ENCODE measurements at regions of chr3 and their contacts with region 1.

Region 1: DNA sequence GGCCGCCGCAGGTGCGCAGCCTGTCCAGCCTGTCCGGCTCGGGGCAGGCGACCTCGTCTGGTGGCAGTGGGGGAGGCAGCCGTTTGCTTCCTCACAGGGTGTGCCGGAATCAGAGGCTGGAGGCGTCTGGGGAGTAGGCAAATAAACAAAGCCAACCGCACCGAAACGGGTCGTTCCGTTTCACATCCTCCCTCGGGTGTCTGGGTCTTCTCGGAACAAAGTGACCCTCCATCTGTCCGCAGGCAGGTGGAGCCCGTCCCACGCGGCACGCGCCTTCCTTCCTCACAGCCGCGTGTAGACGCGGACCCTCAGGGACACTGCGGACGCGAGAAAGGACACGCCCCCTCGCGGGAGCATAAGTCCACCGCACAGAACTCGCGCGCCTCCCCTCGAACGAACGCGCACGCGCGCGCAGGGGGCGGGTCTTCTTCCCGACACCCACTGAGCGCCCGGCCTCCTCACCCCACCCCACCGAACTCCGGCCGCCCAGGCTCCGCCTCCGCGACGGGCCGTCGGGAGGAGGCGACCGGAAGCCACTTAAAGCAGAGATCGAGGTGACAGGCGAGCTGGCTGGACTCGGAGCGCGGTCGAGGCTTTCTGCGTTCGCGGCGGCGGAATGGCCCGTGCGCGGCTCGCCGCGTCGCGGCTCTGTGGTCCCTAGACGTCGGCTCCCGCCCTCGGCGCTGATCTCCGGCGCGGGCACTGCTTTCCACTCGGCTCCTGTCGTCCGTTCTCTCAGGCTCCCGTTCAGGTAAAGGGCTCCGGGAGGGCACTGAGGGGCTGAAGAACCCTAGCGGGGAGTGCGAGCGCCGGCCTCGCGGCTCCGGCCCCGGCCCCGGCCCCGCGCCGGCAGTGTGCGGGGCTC is at the start of gene TIPARP:
- DNase-seq: peak; percentile 94
- ATAC-seq: peak; percentile 86
- H3K4me3 ChIP-seq: peak within 1 kb of the TSS; percentile 70 to 89
- H3K27ac ChIP-seq: peak within 1 kb of the TSS; percentile 83
- H3K4me1 ChIP-seq: peaks cover 12 to 19% of the 10 kb centered on the region in 2 experiments
- H3K27me3 ChIP-seq: no peaks in the 10 kb centered on the region
- CTCF ChIP-seq: peak; percentile 61 to 97 (median 66)
- POLR2A ChIP-seq: peak; percentile 97
- RAD21 ChIP-seq: peak; percentile 84
- total RNA-seq, gene TIPARP: 51.3 TPM

Region 2: GRCh38 chr3:155912579-155913190 is 761.6 kb before region 1 on chr3:
- CTCF ChIA-PET with region 1: no interaction called
- POLR2A ChIA-PET with region 1: no interaction called
- RAD21 ChIA-PET with region 1: no interaction called
- intact Hi-C with region 1: no loop called
- DNase-seq: no peak
- ATAC-seq: no peak
- H3K4me3 ChIP-seq: no peak overlapping the region
- H3K27ac ChIP-seq: no peak overlapping the region
- H3K4me1 ChIP-seq: no peaks in the 10 kb centered on the region
- H3K27me3 ChIP-seq: no peaks in the 10 kb centered on the region
- CTCF ChIP-seq: no peak
- POLR2A ChIP-seq: no peak
- RAD21 ChIP-seq: no peak

Region 3: GRCh38 chr3:156040041-156040440 is 634.2 kb before region 1 on chr3:
- CTCF ChIA-PET with region 1: no interaction called
- POLR2A ChIA-PET with region 1: no interaction called
- RAD21 ChIA-PET with region 1: no interaction called
- intact Hi-C with region 1: loop called (anchors 5 kb)
- DNase-seq: no peak
- ATAC-seq: no peak
- H3K4me3 ChIP-seq: no peak overlapping the region
- H3K27ac ChIP-seq: no peak overlapping the region
- H3K4me1 ChIP-seq: no peaks in the 10 kb centered on the region
- H3K27me3 ChIP-seq: no peaks in the 10 kb centered on the region
- CTCF ChIP-seq: no peak
- POLR2A ChIP-seq: no peak
- RAD21 ChIP-seq: no peak

Region 4: DNA sequence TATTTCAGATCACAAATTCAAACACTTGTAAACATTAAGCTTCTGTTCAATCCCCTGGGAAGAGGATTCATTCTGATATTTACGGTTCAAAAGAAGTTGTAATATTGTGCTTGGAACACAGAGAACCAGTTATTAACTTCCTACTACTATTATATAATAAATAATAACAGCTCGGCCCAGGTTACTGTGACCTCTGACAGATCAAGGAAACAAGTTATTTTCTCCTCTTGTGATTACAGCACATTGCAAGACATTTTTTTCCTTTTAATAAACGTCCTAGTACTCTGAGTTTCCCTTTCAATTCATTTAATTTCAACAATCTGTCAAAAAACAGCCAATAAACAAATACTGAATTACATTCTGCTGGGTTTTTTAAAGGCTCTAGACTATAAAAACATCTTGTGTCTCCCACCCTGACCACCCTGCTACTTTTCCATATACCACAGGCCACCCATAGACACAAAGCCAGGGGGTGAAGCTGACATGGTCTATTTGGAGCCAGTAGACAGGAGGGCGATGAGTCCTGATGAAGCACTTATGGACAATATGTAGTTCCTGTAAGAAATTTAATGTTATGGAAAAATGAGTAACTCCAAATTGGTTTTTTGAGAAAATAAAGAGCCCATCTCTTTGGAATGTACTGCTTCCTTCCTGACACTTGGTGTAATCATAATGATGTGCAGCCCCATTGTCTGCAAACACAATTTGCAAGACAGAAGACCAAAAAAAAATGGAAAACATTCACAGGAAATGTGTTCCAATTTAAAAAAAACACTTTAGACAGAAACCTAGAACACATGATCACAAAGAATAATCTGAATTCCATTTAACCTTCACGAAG is 131.3 kb before region 1 on chr3:
- CTCF ChIA-PET with region 1: interaction called, 4 read pairs
- POLR2A ChIA-PET with region 1: no interaction called
- RAD21 ChIA-PET with region 1: no interaction called
- intact Hi-C with region 1: loop called (anchors 5 kb)
- DNase-seq: no peak
- ATAC-seq: no peak
- H3K4me3 ChIP-seq: no peak overlapping the region
- H3K27ac ChIP-seq: no peak overlapping the region
- H3K4me1 ChIP-seq: no peaks in the 10 kb centered on the region
- H3K27me3 ChIP-seq: no peaks in the 10 kb centered on the region
- CTCF ChIP-seq: no peak
- POLR2A ChIP-seq: no peak
- RAD21 ChIP-seq: no peak

Region 5: GRCh38 chr3:156554842-156555687 is 119.2 kb before region 1 on chr3 and contains the start of gene SSR3:
- CTCF ChIA-PET with region 1: interaction called, 5 read pairs
- POLR2A ChIA-PET with region 1: interaction called, 11 read pairs
- RAD21 ChIA-PET with region 1: no interaction called
- intact Hi-C with region 1: loop called (anchors 1 kb)
- DNase-seq: peak; percentile 98
- ATAC-seq: peak; percentile 99
- H3K4me3 ChIP-seq: peak within 1 kb of the TSS; percentile 77 to 95
- H3K27ac ChIP-seq: peak within 1 kb of the TSS; percentile 63
- H3K4me1 ChIP-seq: peaks cover 3 to 22% of the 10 kb centered on the region in 2 experiments; a peak in 2 of 4 replicates
- H3K27me3 ChIP-seq: no peaks in the 10 kb centered on the region
- CTCF ChIP-seq: no peak
- POLR2A ChIP-seq: peak; percentile 75
- RAD21 ChIP-seq: no peak
- total RNA-seq, gene SSR3: 177 TPM

Region 6: DNA sequence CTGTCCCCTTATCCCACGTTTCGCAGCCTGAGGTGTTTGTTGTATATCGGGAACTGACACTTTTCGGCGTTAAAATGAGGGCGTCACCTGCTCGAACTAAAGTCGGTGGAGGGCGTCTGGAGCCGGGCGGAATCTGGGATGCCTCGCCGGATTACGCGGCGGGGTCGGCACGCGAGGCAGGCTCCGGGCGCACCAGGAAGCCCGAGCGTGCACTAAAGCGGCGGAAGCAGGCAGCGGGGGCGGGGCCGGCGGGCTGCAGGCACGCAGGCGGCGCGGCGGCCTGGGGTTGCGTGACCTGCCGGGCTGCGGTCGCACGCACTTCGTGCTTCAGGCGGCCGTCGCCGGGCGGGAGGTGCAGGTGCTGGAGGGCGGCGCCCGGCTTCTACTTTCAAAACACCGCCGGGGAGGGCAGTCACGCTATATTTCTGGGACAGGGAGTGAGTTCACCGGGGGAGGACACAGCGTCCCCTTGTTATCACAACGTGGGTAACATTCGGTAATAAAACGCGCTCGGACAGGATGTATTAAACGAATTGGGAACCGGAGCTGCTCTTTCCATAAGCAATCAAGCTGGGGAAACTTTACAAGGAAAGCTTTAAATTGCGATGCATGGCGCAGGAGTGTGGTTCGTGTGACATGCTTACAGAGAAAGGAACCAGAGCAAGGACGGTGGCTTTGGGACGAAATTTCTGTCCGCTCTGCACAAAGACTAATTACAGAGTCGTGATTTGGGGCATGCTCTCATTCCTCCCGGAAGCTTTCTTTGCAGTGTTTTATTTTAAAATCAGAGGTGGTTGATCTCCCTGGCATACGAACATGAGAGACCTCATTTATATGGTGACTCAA is 142.7 kb after region 1 on chr3:
- CTCF ChIA-PET with region 1: no interaction called
- POLR2A ChIA-PET with region 1: interaction called, 3 read pairs
- RAD21 ChIA-PET with region 1: no interaction called
- intact Hi-C with region 1: loop called (anchors 2 kb)
- DNase-seq: peak; percentile 77
- ATAC-seq: peak; percentile 75
- H3K4me3 ChIP-seq: peak overlapping the region; percentile 51 to 62
- H3K27ac ChIP-seq: peak overlapping the region; percentile 95
- H3K4me1 ChIP-seq: peaks cover 34 to 90% of the 10 kb centered on the region in 2 experiments
- H3K27me3 ChIP-seq: no peaks in the 10 kb centered on the region
- CTCF ChIP-seq: 0 out of 6 replicates have a peak, but pooled peaks of 1 of the 3 experiments have one; percentile 3
- POLR2A ChIP-seq: peak; percentile 51
- RAD21 ChIP-seq: no peak

Region 7: GRCh38 chr3:156826144-156826895 is 152.0 kb after region 1 on chr3 and contains the start of gene LEKR1:
- CTCF ChIA-PET with region 1: no interaction called
- POLR2A ChIA-PET with region 1: interaction called, 5 read pairs
- RAD21 ChIA-PET with region 1: no interaction called
- intact Hi-C with region 1: loop called (anchors 1 kb)
- DNase-seq: peak; percentile 93
- ATAC-seq: peak; percentile 79
- H3K4me3 ChIP-seq: peak within 1 kb of the TSS; percentile 65 to 66
- H3K27ac ChIP-seq: peak within 1 kb of the TSS; percentile 96
- H3K4me1 ChIP-seq: peaks cover 19 to 58% of the 10 kb centered on the region in 2 experiments; a peak in 3 of 4 replicates
- H3K27me3 ChIP-seq: no peaks in the 10 kb centered on the region
- CTCF ChIP-seq: no peak
- POLR2A ChIP-seq: peak; percentile 59
- RAD21 ChIP-seq: no peak
- total RNA-seq, gene LEKR1: 2.1 TPM

Region 8: GRCh38 chr3:156943430-156943829 is 269.2 kb after region 1 on chr3:
- CTCF ChIA-PET with region 1: no interaction called
- POLR2A ChIA-PET with region 1: no interaction called
- RAD21 ChIA-PET with region 1: no interaction called
- intact Hi-C with region 1: no loop called
- DNase-seq: no peak
- ATAC-seq: no peak
- H3K4me3 ChIP-seq: no peak overlapping the region
- H3K27ac ChIP-seq: no peak overlapping the region
- H3K4me1 ChIP-seq: no peaks in the 10 kb centered on the region
- H3K27me3 ChIP-seq: no peaks in the 10 kb centered on the region
- CTCF ChIP-seq: no peak
- POLR2A ChIP-seq: no peak
- RAD21 ChIP-seq: no peak

Region 9: DNA sequence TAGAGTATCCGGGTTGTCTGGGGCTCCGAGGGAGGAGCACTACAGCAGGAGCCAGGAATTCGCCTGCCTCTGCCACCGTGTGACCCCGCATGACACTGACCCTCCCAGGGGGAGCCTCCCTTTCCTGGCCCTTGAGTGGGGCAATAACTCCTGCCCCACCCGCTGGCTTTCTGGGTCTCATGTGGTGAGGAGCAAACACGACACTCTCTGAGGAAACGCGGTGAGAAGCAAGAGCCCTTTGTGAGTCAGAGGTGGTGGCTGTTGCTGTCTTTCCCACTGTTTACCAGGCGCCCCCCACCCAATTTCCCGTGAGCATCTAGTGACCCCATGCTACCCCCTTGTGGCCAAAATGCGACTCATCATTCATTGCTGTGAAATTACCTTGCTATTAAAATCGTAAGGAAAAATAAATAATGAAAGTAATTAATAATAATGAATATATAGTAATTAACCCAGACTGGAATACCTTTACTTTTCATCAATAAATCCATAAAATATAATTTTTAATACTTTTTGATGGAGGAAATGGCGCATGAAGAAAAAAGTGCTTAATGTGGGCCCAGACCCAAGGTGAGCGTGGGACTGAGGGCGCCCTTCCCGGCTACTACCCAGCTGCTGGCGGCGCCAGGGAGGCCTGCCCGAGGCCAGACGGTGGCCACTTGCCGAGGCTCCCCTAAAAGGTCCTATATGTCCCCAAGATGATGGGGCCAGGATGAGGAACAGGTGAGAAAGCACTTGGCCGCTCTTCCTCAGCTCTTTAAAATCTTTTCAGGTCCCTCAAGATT is 456.4 kb after region 1 on chr3:
- CTCF ChIA-PET with region 1: interaction called, 3 read pairs
- POLR2A ChIA-PET with region 1: interaction called, 4 read pairs
- RAD21 ChIA-PET with region 1: no interaction called
- intact Hi-C with region 1: loop called (anchors 1 kb)
- DNase-seq: peak; percentile 80
- ATAC-seq: peak; percentile 72
- H3K4me3 ChIP-seq: peak overlapping the region; percentile 25 to 36
- H3K27ac ChIP-seq: peak overlapping the region; percentile 99
- H3K4me1 ChIP-seq: peaks cover 54 to 87% of the 10 kb centered on the region in 2 experiments
- H3K27me3 ChIP-seq: no peaks in the 10 kb centered on the region
- CTCF ChIP-seq: peak in 2 of 3 experiments; percentile 65 to 74; a peak in 4 of 6 replicates
- POLR2A ChIP-seq: no peak
- RAD21 ChIP-seq: no peak

Region 10: DNA sequence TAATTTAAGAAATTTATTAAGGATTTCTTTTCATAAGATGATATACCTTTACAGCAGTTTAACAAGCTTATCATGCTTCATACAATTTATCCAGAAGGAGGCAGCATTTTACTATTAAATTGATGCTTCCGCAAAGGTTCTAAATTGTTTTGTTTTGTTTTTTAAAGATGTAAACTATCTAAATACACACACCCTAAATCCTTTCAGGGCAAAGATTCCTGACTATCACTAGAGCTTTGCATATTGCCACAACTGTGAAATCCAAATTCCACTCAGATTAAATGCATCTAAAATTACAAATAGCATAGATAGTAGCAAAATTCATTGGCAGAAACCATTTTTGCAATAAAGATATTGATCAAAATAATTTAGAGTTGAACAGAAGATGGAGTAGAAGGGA is 530.2 kb after region 1 on chr3:
- CTCF ChIA-PET with region 1: no interaction called
- POLR2A ChIA-PET with region 1: no interaction called
- RAD21 ChIA-PET with region 1: no interaction called
- intact Hi-C with region 1: no loop called
- DNase-seq: no peak
- ATAC-seq: peak; percentile 46; the same call in 1 of the 2 replicates
- H3K4me3 ChIP-seq: no peak overlapping the region
- H3K27ac ChIP-seq: no peak overlapping the region
- H3K4me1 ChIP-seq: no peaks in the 10 kb centered on the region
- H3K27me3 ChIP-seq: no peaks in the 10 kb centered on the region
- CTCF ChIP-seq: peak; percentile 40 to 77 (median 65)
- POLR2A ChIP-seq: no peak
- RAD21 ChIP-seq: peak; percentile 83

Measured in HCT116 (cell line).